Mammary epithelial cell (primary cell): ENCODE measurements at regions of chr16 and their contacts with region 1.

Region 1: GRCh38 chr16:69607674-69608073 is 41.9 kb downstream of the NFAT5 start:
- DNase-seq: no peak
- H3K4me3 ChIP-seq: no peak overlapping the region
- H3K27ac ChIP-seq: no peak overlapping the region
- H3K4me1 ChIP-seq: peaks cover 8% of the 10 kb centered on the region
- H3K27me3 ChIP-seq: no peaks in the 10 kb centered on the region
- CTCF ChIP-seq: no peak

Region 2: GRCh38 chr16:69508033-69508759 is 99.5 kb before region 1 on chr16:
- CTCF ChIA-PET with region 1: no interaction called
- dilution Hi-C with region 1: loop called (anchors 5 kb)
- in situ Hi-C with region 1: no loop called
- intact Hi-C with region 1: no loop called
- DNase-seq: no peak
- H3K4me3 ChIP-seq: no peak overlapping the region
- H3K27ac ChIP-seq: no peak overlapping the region
- H3K4me1 ChIP-seq: peaks cover 9% of the 10 kb centered on the region
- H3K27me3 ChIP-seq: no peaks in the 10 kb centered on the region
- CTCF ChIP-seq: no peak

Region 3: GRCh38 chr16:69553332-69553731 is 54.3 kb before region 1 on chr16:
- CTCF ChIA-PET with region 1: no interaction called
- dilution Hi-C with region 1: no loop called
- in situ Hi-C with region 1: no loop called
- intact Hi-C with region 1: no loop called
- DNase-seq: no peak
- H3K4me3 ChIP-seq: no peak overlapping the region
- H3K27ac ChIP-seq: no peak overlapping the region
- H3K4me1 ChIP-seq: no peaks in the 10 kb centered on the region
- H3K27me3 ChIP-seq: no peaks in the 10 kb centered on the region
- CTCF ChIP-seq: no peak

Region 4: DNA sequence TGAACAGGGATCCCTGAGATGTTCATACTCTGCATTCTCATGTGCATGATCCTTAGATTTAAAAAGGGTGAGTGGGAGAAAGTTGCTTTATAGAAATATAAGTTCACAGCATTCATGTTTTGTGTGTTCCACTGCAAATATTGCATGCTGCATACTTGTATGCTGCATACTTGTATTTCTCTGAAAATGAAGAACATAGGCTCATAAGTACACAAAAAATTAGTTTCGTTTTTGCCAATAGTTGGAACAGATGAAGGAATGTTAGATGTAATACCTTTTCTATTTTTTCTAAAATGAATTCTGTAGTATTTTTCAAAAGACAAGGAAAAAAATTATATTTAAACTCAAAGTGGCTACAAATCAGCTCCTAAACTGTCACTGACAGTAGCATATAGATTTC is 37.1 kb after region 1 on chr16:
- CTCF ChIA-PET with region 1: no interaction called
- dilution Hi-C with region 1: no loop called
- in situ Hi-C with region 1: no loop called
- intact Hi-C with region 1: no loop called
- DNase-seq: no peak
- H3K4me3 ChIP-seq: no peak overlapping the region
- H3K27ac ChIP-seq: no peak overlapping the region
- H3K4me1 ChIP-seq: no peaks in the 10 kb centered on the region
- H3K27me3 ChIP-seq: no peaks in the 10 kb centered on the region
- CTCF ChIP-seq: no peak